Aorta (tissue), 5 donors: ENCODE measurements at regions of chr2 and their contacts with region 1.

Region 1: GRCh38 chr2:10408649-10409579 is 39.2 kb downstream of the ODC1 start:
- DNase-seq: peak; percentile 79 to 89
- ATAC-seq: peak; percentile 76
- H3K4me3 ChIP-seq: no peak overlapping the region
- H3K27ac ChIP-seq: no peak overlapping the region
- H3K4me1 ChIP-seq: peaks cover 0 to 4% of the 10 kb centered on the region in 2 donors
- H3K27me3 ChIP-seq: no peaks in the 10 kb centered on the region

Region 2: GRCh38 chr2:10285556-10286198 is 123.2 kb before region 1 on chr2:
- intact Hi-C with region 1: loop called in 1 of 2 experiments (anchors 1 kb)
- DNase-seq: peak; percentile 93 to 97
- ATAC-seq: peak; percentile 90
- H3K4me3 ChIP-seq: no peak overlapping the region
- H3K27ac ChIP-seq: peak overlapping the region in 1 of 2 donors; percentile 92
- H3K4me1 ChIP-seq: no peaks in the 10 kb centered on the region
- H3K27me3 ChIP-seq: no peaks in the 10 kb centered on the region

Region 3: GRCh38 chr2:10302479-10303180 is 106.3 kb before region 1 on chr2 and contains the start of gene HPCAL1:
- intact Hi-C with region 1: loop called (anchors 2 to 5 kb)
- DNase-seq: peak; percentile 93 to 95
- ATAC-seq: peak; percentile 94
- H3K4me3 ChIP-seq: peak within 1 kb of the TSS; percentile 66 to 91
- H3K27ac ChIP-seq: peak within 1 kb of the TSS in 1 of 2 donors; percentile 45
- H3K4me1 ChIP-seq: no peaks in the 10 kb centered on the region
- H3K27me3 ChIP-seq: no peaks in the 10 kb centered on the region
- total RNA-seq, gene HPCAL1: 21.4 to 28.1 TPM

Region 4: GRCh38 chr2:10721396-10722251 is 312.7 kb after region 1 on chr2 and contains the start of gene ATP6V1C2:
- intact Hi-C with region 1: no loop called
- DNase-seq: peak in 1 of 2 donors; percentile 79
- ATAC-seq: peak; percentile 19
- H3K4me3 ChIP-seq: peak within 1 kb of the TSS; percentile 52 to 82
- H3K27ac ChIP-seq: no peak within 1 kb of the TSS
- H3K4me1 ChIP-seq: no peaks in the 10 kb centered on the region
- H3K27me3 ChIP-seq: no peaks in the 10 kb centered on the region
- total RNA-seq, gene ATP6V1C2: 0.49 to 1.7 TPM

Region 5: GRCh38 chr2:10762651-10763465 is 353.9 kb after region 1 on chr2:
- intact Hi-C with region 1: no loop called
- DNase-seq: peak in 1 of 2 donors; percentile 67
- ATAC-seq: no peak
- H3K4me3 ChIP-seq: no peak overlapping the region
- H3K27ac ChIP-seq: no peak overlapping the region
- H3K4me1 ChIP-seq: no peaks in the 10 kb centered on the region
- H3K27me3 ChIP-seq: no peaks in the 10 kb centered on the region